Heart right ventricle (tissue), 16 donors: ENCODE measurements at regions of chr5 and their contacts with region 1.

Region 1: GRCh38 chr5:154729613-154730012 is 25.6 kb upstream of the LARP1 start:
- DNase-seq: no peak
- ATAC-seq: no peak
- H3K4me3 ChIP-seq: no peak overlapping the region
- H3K27ac ChIP-seq: no peak overlapping the region
- H3K4me1 ChIP-seq: peaks cover 0 to 4% (median 0%) of the 10 kb centered on the region in 9 donors
- H3K27me3 ChIP-seq: no peaks in the 10 kb centered on the region
- CTCF ChIP-seq: no peak

Region 2: DNA sequence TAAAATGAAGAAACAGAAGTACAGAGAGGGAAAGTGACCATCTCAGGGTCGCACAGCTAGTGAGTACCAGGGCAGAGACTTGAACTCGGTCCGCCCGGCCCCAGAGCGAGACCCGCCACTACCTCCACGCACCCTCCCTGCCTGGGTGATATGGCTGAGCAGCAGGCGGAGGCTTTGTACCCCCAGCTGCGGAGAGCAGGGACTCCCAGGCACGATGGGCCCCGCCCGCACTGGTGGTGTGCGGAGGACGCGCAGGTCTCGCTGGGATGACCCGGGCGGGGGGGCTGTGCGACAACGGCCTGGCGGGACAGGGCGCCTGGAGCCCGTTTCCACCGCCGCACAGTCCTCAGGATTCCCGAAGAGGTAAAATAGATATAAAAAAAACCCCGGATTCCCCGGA is 39.1 kb before region 1 on chr5:
- intact Hi-C with region 1: loop called in 1 of 10 experiments (anchors 5 kb)
- DNase-seq: no peak
- ATAC-seq: peak in 2 of 8 donors; percentile 10 to 28
- H3K4me3 ChIP-seq: no peak overlapping the region
- H3K27ac ChIP-seq: peak overlapping the region in 5 of 10 donors; percentile 75 to 92 (median 86)
- H3K4me1 ChIP-seq: peaks cover 0 to 17% (median 0%) of the 10 kb centered on the region in 9 donors
- H3K27me3 ChIP-seq: peaks cover 0 to 5% (median 0%) of the 10 kb centered on the region in 7 donors
- CTCF ChIP-seq: no peak

Region 3: DNA sequence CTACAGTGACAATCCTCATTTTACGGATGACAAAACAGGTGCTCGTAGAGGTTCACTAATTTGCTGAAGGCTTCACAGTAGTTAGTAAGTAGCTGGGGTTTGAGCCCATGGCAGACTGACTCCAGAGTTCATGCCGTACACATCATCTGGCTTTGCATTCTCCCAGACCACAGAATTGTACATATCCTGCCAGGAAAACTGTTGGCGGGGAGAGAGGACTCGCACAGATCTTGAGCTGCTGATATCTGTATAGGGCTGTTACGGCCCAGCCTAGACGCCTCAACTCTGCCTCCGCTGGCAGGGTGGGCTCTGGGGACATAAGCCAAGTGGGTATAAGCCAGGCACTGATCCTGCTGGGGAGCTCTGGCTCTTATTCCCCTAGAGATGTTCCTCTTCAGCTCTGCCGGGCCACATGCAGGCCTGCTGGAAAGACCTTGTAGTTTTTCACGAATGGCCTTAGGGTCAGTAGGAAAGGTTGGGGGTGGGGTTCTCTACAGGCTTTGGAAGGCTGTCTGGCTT is 41.8 kb after region 1 on chr5:
- intact Hi-C with region 1: no loop called
- DNase-seq: peak; percentile 31 to 33
- ATAC-seq: peak; percentile 55 to 74 (median 67)
- H3K4me3 ChIP-seq: peak overlapping the region in 2 of 10 donors; percentile 1 to 5
- H3K27ac ChIP-seq: peak overlapping the region in 9 of 10 donors; percentile 23 to 76 (median 55)
- H3K4me1 ChIP-seq: peaks cover 29 to 100% (median 96%) of the 10 kb centered on the region in 9 donors
- H3K27me3 ChIP-seq: no peaks in the 10 kb centered on the region
- CTCF ChIP-seq: no peak

Region 4: DNA sequence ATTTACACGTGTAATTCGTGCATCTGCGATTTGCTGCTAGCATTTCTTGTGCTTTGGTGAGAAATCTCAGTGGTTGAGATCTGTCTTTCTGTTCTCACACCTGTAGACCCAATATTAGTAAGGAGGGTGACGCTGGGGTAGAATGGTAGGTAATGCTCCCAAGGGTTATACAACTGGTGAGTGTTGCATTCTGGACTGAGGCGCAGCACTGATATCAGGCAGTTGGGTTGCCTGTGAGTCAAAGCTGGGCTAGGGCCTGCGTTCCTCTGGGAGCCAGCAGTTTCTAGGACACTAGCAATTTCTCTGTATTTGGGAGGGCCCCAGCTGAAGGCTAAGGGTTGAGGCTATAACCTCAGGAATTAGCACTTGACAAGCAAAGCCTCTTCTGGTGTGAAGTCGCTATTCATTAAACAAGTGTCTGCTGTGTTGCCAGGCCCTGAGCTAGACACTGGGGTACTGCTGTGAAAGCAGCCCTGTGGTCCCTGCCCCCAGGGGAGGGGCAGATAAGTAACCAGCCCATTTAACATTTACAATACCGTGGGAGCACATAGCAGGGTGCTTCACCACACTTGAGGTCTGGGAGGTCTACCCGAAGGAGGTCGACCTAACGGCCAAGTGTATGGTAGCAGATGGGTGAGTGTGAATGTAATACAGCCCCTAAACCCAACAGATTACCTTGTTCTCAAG is 54.3 kb after region 1 on chr5:
- intact Hi-C with region 1: no loop called
- DNase-seq: peak in 1 of 2 donors; percentile 24
- ATAC-seq: peak; percentile 59 to 79 (median 70)
- H3K4me3 ChIP-seq: no peak overlapping the region
- H3K27ac ChIP-seq: peak overlapping the region in 9 of 10 donors; percentile 39 to 79 (median 62)
- H3K4me1 ChIP-seq: peaks cover 31 to 100% (median 93%) of the 10 kb centered on the region in 9 donors
- H3K27me3 ChIP-seq: no peaks in the 10 kb centered on the region
- CTCF ChIP-seq: no peak